B cell (primary cell): ENCODE measurements at regions of chr7 and their contacts with region 1.

Region 1: DNA sequence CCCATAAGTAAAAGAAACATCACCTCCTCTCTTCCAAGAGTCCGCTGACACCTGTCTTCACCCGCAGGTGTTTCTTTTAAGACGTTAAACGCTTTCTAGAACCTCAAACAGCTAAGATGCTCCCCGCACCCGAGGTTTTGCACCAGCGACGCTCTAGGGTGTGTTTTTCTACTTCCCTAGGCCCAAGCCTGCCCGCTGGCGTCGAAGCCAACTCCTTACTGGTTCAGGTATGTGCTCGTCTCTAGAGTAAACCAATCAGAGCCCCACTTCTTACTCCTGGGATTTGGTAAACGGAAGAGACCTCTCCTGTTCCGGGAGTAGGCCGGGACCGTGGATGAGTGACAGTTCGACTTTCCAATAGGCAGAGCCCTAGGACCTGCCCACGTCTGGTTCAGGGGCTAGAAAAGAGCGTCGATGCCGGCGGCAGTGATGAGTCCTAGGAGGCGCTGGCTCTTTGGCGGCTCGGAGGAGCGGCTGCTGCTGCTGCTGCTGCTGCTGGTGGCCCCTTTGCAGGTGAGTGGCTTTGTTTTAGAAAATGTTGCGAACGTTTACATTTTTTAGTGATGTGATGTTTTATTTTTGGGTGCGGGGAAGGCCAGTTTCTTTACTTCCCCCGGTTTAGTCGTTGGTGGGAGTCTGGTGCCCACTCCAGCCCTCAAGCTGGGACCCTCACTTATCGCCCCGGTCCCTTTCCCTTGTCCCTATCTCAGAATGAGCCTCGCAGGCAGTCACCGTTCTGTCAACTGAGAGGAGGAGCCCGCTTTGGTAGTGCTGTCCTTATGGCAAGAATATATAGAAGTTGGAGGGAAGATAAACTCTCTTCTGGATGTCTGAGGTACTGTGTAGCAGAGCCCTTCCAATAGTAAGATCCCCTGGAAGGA is at the start of gene BPGM:
- DNase-seq: peak; percentile 99
- ATAC-seq: peak; percentile 94
- H3K4me3 ChIP-seq: peak within 1 kb of the TSS; percentile 70 to 93 (median 79)
- H3K4me3 Mint-ChIP-seq: no peak within 1 kb of the TSS
- H3K27ac ChIP-seq: peak within 1 kb of the TSS; percentile 84 to 85
- H3K27ac Mint-ChIP-seq: no peak within 1 kb of the TSS
- H3K4me1 ChIP-seq: peaks cover 12 to 26% of the 10 kb centered on the region in 2 donors
- H3K4me1 Mint-ChIP-seq: peaks cover 21% of the 10 kb centered on the region
- H3K27me3 ChIP-seq: no peaks in the 10 kb centered on the region
- H3K27me3 Mint-ChIP-seq: no peaks in the 10 kb centered on the region
- CTCF ChIP-seq: peak; percentile 9
- total RNA-seq, gene BPGM: 8.7 and 9.7 TPM in 2 replicates

Region 2: DNA sequence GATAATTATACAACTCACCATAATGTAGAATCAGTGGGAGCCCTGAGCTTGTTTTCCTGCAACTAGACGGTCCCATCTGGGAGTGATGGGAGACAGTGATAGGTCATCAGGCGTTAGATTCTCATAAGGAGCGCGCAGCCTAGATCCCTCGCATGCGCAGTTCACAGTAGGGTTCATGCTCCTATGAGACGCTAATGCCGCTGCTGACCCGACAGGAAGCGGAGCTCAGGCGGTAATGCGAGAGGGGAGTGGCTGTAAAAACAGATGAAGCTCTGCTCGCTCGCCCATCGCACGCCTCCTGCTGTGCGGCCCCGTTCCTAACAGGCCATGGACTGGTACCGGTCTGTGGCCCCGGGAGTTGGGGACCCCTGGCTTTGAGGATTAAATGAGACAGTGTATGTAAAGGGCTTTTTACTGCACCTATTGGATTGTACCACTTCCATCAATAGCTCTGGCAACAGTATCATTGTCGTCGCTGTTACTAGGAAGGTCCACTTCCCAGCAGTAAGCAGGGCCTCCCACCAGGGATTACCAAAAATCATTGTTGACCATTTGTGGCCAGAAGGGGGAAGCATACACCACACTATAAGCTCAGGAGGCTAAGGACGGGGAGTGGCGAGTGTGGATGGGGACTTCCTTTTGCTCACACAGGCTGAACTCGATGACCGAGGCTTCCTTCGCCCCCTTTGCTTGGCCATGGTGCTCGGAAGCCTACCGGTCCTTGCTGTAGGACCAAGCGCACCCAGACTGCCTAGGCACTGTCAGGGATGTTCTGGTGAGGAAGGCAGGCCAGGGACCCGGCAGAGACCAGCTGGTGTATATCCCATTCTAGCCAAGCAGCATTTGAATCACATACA is 214.1 kb before region 1 on chr7:
- CTCF ChIA-PET with region 1: interaction called, 3 read pairs
- POLR2A ChIA-PET with region 1: interaction called, 3 read pairs
- intact Hi-C with region 1: loop called (anchors 1 kb)
- DNase-seq: peak; percentile 88
- ATAC-seq: peak; percentile 87
- H3K4me3 ChIP-seq: peak overlapping the region in 4 of 5 experiments; percentile 28 to 57 (median 46)
- H3K4me3 Mint-ChIP-seq: peak overlapping the region; percentile 86
- H3K27ac ChIP-seq: peak overlapping the region; percentile 29 to 62
- H3K27ac Mint-ChIP-seq: peak overlapping the region; percentile 86
- H3K4me1 ChIP-seq: peaks cover 17 to 23% of the 10 kb centered on the region in 2 donors
- H3K4me1 Mint-ChIP-seq: peaks cover 19% of the 10 kb centered on the region
- H3K27me3 ChIP-seq: no peaks in the 10 kb centered on the region
- H3K27me3 Mint-ChIP-seq: peaks cover 4% of the 10 kb centered on the region
- CTCF ChIP-seq: peak; percentile 82

Region 3: DNA sequence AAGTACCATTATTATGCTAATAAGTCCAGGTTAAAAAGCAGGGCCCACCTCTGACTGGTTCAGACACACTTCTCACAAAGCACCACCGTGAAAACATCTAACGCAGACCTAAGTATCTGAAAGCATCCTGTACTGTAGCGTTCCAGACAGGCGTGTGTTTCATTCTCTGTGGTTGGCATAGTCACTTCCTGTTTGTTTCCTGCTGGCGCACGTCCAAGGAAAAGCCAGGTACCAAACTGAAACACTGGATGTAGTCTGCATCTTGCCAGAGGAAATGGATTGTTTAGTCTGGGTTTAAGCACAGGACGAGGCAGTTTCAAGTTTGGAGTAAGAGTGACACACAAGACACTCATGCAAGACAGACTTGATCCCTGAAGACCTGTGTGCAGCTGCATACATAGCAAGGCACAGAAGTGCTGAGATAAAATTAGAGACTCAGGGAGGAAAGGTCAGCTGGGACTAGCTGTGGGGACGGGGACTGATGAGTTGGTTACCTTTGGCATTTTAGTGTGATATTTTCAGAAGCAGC is 23.2 kb after region 1 on chr7:
- CTCF ChIA-PET with region 1: interaction called, 3 read pairs
- POLR2A ChIA-PET with region 1: no interaction called
- intact Hi-C with region 1: loop called (anchors 2 kb)
- DNase-seq: peak; percentile 36
- ATAC-seq: peak; percentile 64
- H3K4me3 ChIP-seq: peak overlapping the region in 1 of 5 experiments; percentile 11
- H3K4me3 Mint-ChIP-seq: peak overlapping the region; percentile 44
- H3K27ac ChIP-seq: peak overlapping the region; percentile 14 to 57
- H3K27ac Mint-ChIP-seq: peak overlapping the region; percentile 6
- H3K4me1 ChIP-seq: peaks cover 13 to 18% of the 10 kb centered on the region in 2 donors
- H3K4me1 Mint-ChIP-seq: peaks cover 29% of the 10 kb centered on the region
- H3K27me3 ChIP-seq: no peaks in the 10 kb centered on the region
- H3K27me3 Mint-ChIP-seq: no peaks in the 10 kb centered on the region
- CTCF ChIP-seq: no peak

Region 4: GRCh38 chr7:135147899-135148721 is 501.4 kb after region 1 on chr7 and contains the start of gene TMEM140:
- CTCF ChIA-PET with region 1: no interaction called
- POLR2A ChIA-PET with region 1: interaction called, 3 read pairs
- intact Hi-C with region 1: loop called (anchors 5 kb)
- DNase-seq: peak; percentile 87
- ATAC-seq: peak; percentile 78
- H3K4me3 ChIP-seq: peak within 1 kb of the TSS; percentile 51 to 98 (median 72)
- H3K4me3 Mint-ChIP-seq: peak within 1 kb of the TSS; percentile 91
- H3K27ac ChIP-seq: peak within 1 kb of the TSS; percentile 86 to 90
- H3K27ac Mint-ChIP-seq: peak within 1 kb of the TSS; percentile 94
- H3K4me1 ChIP-seq: peaks cover 42 to 52% of the 10 kb centered on the region in 2 donors
- H3K4me1 Mint-ChIP-seq: peaks cover 62% of the 10 kb centered on the region
- H3K27me3 ChIP-seq: no peaks in the 10 kb centered on the region
- H3K27me3 Mint-ChIP-seq: no peaks in the 10 kb centered on the region
- CTCF ChIP-seq: no peak
- total RNA-seq, gene TMEM140: 79.1 and 84.9 TPM in 2 replicates

Region 5: GRCh38 chr7:135509903-135510602 is 863.4 kb after region 1 on chr7 and contains the start of gene CNOT4:
- CTCF ChIA-PET with region 1: no interaction called
- POLR2A ChIA-PET with region 1: no interaction called
- intact Hi-C with region 1: loop called (anchors 1 kb)
- DNase-seq: peak; percentile 97
- ATAC-seq: peak; percentile 95
- H3K4me3 ChIP-seq: peak within 1 kb of the TSS; percentile 79 to 96 (median 89)
- H3K4me3 Mint-ChIP-seq: no peak within 1 kb of the TSS
- H3K27ac ChIP-seq: peak within 1 kb of the TSS; percentile 92 to 96
- H3K27ac Mint-ChIP-seq: no peak within 1 kb of the TSS
- H3K4me1 ChIP-seq: peaks cover 17 to 24% of the 10 kb centered on the region in 2 donors
- H3K4me1 Mint-ChIP-seq: peaks cover 10% of the 10 kb centered on the region
- H3K27me3 ChIP-seq: no peaks in the 10 kb centered on the region
- H3K27me3 Mint-ChIP-seq: no peaks in the 10 kb centered on the region
- CTCF ChIP-seq: no peak
- total RNA-seq, gene CNOT4: 52.1 and 55.1 TPM in 2 replicates